Activated CD4-positive, alpha-beta memory T cell treated with anti-CD3 and anti-CD28 coated beads, Interleukin-2, amount 10 ng/mL, durations not matched to agents 7 days and 5 days (primary cell): ENCODE measurements at regions of chr20 and their contacts with region 1.

Region 1: DNA sequence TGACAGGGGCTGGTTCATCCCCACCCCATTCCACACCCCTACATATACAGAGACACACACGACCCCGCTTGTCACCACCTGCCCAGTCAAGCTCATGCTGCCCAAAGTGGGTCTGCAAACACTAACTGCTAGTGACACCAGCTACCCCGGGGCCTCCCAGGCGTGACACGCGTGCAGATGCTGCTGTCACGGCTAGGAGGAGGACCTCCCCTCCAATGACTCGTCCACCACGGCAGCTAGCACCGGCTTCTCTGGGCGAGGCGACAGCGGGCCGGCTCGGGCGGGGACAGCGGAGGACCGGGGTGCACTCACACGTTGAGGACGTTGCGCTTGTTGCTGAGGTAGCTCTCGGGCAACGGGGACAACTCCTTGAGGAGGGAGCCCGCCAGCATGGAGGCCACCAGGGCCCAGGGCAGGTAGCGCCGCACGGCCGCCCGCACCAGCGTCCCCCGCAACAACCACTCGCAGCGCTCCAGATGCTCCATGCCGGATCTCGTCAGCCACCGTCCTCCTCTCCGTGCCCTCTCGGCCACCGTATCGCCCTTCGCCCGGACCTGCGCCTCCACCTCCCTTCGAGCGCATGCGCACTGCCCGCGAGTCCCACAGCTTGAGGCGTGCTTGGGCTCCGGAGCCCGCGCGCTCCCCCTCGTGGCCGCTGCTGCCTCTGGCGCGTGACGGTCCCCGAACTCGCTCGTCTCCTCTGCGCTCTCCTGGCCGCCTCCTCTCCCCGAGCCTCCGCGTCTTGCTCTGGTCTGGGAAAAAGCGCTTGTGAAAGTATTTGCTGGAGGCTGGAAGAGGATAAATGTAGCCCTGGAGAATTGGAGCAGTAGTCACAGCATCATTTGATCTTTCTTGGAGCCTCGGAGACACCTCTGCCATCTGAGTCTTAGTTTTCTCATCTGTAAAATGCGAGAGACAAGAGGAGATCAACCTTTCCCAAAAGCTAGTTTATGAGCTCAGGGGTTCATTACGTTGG is at the start of gene FITM2:
- DNase-seq: peak; percentile 97
- H3K4me3 Mint-ChIP-seq: peak within 1 kb of the TSS; percentile 89
- H3K27ac Mint-ChIP-seq: peak within 1 kb of the TSS; percentile 77
- H3K4me1 Mint-ChIP-seq: peaks cover 19% of the 10 kb centered on the region
- H3K27me3 Mint-ChIP-seq: no peaks in the 10 kb centered on the region
- total RNA-seq, gene FITM2: 2.2 to 2.7 TPM

Region 2: DNA sequence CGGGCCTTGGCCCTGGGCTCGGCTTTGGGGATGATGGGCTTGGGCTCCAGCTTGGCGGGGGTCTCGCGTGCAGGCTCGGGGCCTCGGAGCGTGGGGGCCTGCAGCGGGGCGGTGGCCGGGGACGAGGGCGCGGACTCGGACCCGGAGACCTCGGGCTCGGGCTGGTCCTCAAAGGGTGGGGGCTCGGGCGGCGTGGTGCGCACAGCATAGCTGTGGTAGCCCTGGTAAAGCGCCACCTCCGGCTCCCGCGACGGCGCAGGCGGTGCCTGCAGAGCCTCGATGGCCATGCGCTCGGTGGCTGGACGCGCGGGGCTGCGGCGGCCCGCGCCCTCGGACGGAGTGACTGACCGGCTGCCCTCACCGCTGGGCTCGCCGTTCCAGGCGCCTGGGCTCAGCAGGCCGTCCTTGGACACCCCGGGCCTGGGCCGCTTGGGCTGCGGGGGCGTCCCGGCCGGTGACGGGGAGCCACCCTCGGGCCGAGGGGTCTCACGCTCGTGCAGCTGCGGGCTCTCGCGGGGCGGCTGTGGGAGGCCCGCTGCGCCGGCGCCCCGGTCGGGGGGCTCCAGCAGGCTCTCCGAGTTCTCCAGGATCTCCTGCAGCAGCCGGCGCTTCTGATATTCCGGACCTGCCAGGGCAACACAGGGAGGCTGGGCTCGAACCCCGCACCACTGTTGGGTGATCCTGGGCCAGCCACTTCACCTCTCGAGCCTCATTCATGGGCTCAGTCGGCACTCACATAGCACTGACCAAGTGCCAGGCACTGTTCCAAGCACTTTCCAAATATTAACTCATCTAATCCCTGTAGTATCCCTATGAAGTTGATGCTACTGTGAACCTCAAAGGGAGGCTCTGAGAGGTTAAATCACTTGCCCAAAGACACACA is 194.9 kb before region 1 on chr20:
- CTCF ChIA-PET with region 1: interaction called, 27 read pairs
- POLR2A ChIA-PET with region 1: no interaction called
- DNase-seq: no peak
- H3K4me3 Mint-ChIP-seq: no peak overlapping the region
- H3K27ac Mint-ChIP-seq: no peak overlapping the region
- H3K4me1 Mint-ChIP-seq: peaks cover 1% of the 10 kb centered on the region
- H3K27me3 Mint-ChIP-seq: peaks cover 26% of the 10 kb centered on the region

Region 3: DNA sequence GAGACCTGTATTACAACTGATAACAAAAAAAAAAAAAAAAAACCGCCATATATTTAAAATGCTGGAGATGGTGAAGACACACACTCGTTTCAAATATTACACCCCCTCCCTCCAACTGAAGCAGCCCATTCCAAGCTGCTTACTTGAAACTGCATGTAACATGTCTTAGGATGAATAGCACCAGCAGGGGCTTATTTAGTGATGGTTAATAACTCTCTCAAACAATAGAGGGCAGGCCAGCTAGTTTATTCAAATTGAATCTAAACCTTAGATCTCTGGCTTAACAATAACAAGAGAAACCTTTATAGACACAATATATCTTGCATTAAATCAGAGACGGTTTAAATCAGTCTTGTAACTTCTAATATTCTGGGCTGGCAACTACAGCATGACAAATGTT is 114.7 kb before region 1 on chr20:
- CTCF ChIA-PET with region 1: interaction called, 15 read pairs
- POLR2A ChIA-PET with region 1: no interaction called
- DNase-seq: no peak
- H3K4me3 Mint-ChIP-seq: no peak overlapping the region
- H3K27ac Mint-ChIP-seq: no peak overlapping the region
- H3K4me1 Mint-ChIP-seq: peaks cover 43% of the 10 kb centered on the region
- H3K27me3 Mint-ChIP-seq: peaks cover 7% of the 10 kb centered on the region

Region 4: GRCh38 chr20:44287272-44288097 is 23.5 kb before region 1 on chr20:
- CTCF ChIA-PET with region 1: interaction called, 11 read pairs
- POLR2A ChIA-PET with region 1: no interaction called
- DNase-seq: no peak
- H3K4me3 Mint-ChIP-seq: no peak overlapping the region
- H3K27ac Mint-ChIP-seq: no peak overlapping the region
- H3K4me1 Mint-ChIP-seq: no peaks in the 10 kb centered on the region
- H3K27me3 Mint-ChIP-seq: peaks cover 2% of the 10 kb centered on the region

Region 5: DNA sequence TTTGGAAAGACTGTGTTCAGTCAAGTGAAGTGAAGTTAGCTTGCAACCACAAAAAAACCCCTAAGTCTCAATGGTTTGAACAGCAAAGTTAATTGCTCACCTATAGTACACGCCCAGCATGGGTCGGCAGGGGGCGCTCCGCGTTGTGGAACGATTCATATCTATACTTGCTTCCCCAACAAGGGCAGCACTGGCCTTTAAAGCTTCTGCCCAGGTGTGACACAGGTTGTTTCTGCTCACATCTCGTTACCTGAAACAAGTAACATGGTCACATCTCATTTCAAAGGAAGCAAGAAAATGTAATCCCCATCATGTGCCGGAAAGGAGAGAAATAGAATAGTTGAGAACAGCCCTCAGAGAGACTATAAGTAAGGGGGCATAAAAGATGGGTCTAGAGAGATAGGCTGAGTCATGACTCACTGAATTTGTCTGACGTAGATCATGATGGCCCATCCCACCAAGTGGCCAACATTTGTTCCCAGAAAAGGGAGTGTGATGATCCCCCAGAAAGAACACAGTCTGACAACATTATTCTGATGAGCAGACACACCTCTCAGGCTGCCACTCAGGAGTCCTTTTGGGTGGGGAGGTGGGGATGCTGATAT is 73.6 kb after region 1 on chr20:
- CTCF ChIA-PET with region 1: interaction called, 29 read pairs
- POLR2A ChIA-PET with region 1: no interaction called
- DNase-seq: peak; percentile 84
- H3K4me3 Mint-ChIP-seq: no peak overlapping the region
- H3K27ac Mint-ChIP-seq: no peak overlapping the region
- H3K4me1 Mint-ChIP-seq: peaks cover 5% of the 10 kb centered on the region
- H3K27me3 Mint-ChIP-seq: peaks cover 18% of the 10 kb centered on the region